Heart right ventricle (tissue), 16 donors: ENCODE measurements at regions of chr10 and their contacts with region 1.

Region 1: DNA sequence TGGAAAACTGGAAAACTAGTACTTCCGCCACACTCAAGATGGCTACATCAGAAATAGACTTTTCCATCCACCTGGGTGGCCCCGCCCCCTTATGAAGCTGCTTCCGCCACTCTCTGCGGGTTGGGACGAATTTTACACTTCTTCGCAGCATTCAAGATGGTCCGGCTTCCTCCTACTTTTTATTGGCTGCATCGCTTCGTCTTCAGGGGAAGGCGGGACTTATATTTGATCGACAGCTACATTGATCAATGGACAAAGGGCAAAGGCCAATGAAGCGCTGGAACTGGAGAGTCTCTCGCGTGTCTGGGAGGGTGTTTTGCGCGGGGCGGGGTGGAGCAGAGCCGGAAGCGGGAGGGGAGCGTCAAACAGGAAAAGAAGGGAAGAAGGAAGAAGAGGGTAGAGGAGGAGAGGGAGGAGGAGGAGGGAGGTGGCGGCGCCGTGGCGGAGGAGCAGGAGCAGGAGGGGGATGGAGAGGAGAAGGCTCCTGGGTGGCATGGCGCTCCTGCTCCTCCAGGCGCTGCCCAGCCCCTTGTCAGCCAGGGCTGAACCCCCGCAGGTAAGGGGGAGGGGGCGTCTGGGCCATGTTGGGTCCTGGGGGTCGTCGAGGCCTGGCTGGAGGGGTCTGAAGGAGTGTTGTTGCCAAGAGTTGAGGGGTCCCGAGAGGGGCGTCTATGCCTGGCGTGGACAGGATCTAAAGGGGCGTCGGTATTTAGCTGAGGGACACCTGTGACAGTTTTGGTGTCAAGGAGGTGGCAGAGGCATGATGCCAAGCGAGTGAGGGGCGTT is at the start of gene WBP1L:
- DNase-seq: peak; percentile 93 to 99
- ATAC-seq: peak; percentile 96 to 98 (median 98)
- H3K4me3 ChIP-seq: peak within 1 kb of the TSS; percentile 83 to 99 (median 96)
- H3K27ac ChIP-seq: peak within 1 kb of the TSS; percentile 79 to 98 (median 94)
- H3K4me1 ChIP-seq: peaks cover 0 to 58% (median 32%) of the 10 kb centered on the region in 9 donors
- H3K27me3 ChIP-seq: no peaks in the 10 kb centered on the region
- CTCF ChIP-seq: no peak
- total RNA-seq, gene WBP1L: 17.3 to 33.3 (median 21.0) TPM

Region 2: DNA sequence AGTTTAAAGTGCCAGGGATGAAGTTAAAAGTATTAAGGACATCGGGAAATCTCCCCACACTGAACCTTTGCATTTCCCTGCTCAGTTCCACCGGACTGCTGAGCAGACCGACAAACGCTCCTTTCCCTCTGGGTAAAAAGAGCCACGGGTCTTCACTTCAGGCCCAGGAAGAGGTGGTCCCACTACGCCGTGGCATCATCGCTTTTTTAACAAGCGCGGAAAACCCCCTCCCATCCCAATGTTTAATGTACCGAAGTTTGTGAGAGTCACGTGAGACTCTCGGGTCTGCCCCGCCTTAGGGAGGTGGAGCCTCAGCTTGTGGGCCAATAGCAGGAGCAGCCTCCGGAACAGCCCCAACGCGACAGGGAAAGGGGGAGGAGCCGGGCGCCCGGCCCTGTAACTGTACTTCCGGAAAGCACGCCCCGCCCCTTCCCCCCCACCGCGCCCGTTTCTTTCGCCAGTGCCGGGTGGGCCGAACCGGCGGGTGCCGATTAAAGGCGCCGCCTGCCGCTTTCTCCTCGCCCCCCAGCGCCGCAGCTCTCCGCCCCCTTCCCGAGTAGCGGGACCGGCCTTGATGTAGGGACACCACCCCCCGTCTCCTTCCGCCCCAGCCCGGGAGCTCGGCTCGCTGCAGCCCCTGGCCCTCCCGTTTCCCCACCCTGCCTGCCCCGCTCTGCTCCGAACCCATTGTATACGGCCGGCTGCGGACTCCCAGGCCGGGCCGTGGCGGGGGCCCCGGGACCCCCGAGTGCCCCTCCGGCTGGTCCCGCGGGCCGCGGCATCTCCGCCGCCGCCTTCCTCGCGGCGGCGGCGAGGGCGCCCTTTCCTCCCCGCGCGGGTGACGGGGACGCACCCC is 101.7 kb before region 1 on chr10:
- intact Hi-C with region 1: no loop called
- DNase-seq: peak; percentile 99
- ATAC-seq: peak; percentile 70 to 84 (median 80)
- H3K4me3 ChIP-seq: peak overlapping the region; percentile 69 to 97 (median 90)
- H3K27ac ChIP-seq: peak overlapping the region; percentile 95 to 100 (median 99)
- H3K4me1 ChIP-seq: peaks cover 4 to 23% (median 13%) of the 10 kb centered on the region in 9 donors
- H3K27me3 ChIP-seq: no peaks in the 10 kb centered on the region
- CTCF ChIP-seq: peak in 3 of 9 donors; percentile 6 to 15 (median 10)

Region 3: DNA sequence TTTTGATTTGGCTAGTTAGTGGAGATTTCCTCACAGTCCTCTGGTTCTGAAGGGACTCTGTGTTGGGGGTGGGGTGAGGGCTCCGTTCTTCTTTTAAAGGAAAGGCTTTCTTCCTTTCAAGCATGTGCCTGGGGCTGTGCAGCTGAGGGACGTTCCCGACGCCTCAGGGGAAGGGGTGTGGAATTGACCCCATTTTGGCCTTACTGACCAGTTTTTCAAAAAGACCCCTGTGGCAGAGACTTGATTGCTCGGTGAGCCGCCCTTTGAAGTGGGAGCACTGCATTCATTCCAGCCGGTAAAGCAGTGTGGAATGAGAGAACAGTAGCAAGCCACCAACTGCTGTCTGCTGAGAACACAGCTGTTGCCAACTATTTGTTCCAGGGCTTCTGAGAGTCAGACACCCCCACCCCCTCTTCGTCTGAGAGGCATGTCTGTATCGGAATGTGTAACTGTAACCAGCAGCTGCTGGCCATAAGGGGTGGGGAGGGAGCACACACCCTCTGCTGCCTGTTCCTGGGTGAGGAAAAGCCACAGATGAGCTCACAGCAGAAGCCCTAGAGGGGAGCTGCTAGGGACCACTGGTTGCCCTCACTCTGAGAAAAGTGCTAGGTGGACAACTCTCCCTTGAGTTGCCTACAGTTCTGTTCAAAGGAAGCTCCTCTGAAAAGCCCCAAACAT is 33.1 kb after region 1 on chr10:
- intact Hi-C with region 1: loop called in 2 of 10 experiments (anchors 5 kb)
- DNase-seq: peak; percentile 64 to 92
- ATAC-seq: peak; percentile 68 to 87 (median 81)
- H3K4me3 ChIP-seq: peak overlapping the region; percentile 36 to 67 (median 59)
- H3K27ac ChIP-seq: peak overlapping the region; percentile 85 to 99 (median 97)
- H3K4me1 ChIP-seq: peaks cover 41 to 100% (median 87%) of the 10 kb centered on the region in 9 donors
- H3K27me3 ChIP-seq: no peaks in the 10 kb centered on the region
- CTCF ChIP-seq: no peak

Region 4: DNA sequence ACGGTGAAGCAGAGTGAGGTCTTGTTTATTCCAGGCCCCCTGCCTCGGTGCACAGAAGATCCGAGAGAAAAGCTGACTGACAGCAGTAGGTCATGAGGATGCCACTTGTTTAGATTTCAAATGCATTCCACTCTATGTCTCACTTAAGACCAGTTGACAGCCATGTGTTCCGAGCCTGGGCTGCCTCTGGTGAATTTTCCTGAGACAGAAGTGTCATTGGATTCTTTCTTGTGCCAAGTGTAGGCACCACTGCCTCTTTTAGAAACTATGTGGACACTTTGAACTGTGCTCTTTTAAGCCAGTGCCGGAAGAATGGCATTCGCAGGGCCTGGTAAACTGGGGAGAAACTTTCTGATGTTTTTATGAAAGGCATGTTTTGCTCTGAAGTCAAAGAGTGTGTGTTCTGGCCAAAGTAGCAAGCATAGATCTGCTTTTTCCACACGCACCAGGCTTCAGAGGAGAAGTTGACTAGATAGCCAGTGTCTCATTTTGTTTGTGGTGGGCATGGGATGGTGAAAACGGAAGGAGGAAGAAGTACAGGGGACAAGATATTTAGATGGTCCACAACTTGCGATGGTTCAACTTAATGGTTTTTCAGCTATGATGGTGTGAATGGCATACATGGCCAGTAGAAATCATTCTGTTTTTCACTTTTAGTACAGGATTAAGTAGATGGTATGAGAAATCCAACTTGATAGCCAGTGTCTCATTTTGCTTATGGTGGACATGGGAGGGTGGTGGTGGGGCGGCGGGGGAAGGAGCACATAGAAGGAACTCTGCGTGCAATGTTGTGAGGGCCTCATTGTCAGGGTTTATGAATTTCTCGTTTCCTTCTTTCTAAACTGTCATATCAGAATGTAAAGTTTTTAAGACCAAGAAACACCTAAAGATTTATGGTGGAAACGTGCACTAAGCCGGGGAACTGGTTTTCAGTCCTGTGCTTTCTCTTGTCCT is 51.9 kb after region 1 on chr10:
- intact Hi-C with region 1: no loop called
- DNase-seq: no peak
- ATAC-seq: peak; percentile 12 to 71 (median 51)
- H3K4me3 ChIP-seq: peak overlapping the region in 1 of 10 donors; percentile 35
- H3K27ac ChIP-seq: peak overlapping the region; percentile 63 to 93 (median 84)
- H3K4me1 ChIP-seq: peaks cover 42 to 100% (median 96%) of the 10 kb centered on the region in 9 donors
- H3K27me3 ChIP-seq: no peaks in the 10 kb centered on the region
- CTCF ChIP-seq: no peak

Region 5: GRCh38 chr10:103125323-103126267 is 381.8 kb after region 1 on chr10:
- intact Hi-C with region 1: no loop called
- DNase-seq: no peak
- ATAC-seq: no peak
- H3K4me3 ChIP-seq: no peak overlapping the region
- H3K27ac ChIP-seq: peak overlapping the region in 1 of 10 donors; percentile 56
- H3K4me1 ChIP-seq: peaks cover 8 to 58% (median 38%) of the 10 kb centered on the region in 9 donors
- H3K27me3 ChIP-seq: no peaks in the 10 kb centered on the region
- CTCF ChIP-seq: no peak